Aorta (tissue), 5 donors: ENCODE measurements at regions of chr7 and their contacts with region 1.

Region 1: GRCh38 chr7:30224511-30225062 is 59.8 kb upstream of the ZNRF2 start:
- DNase-seq: no peak
- ATAC-seq: no peak
- H3K4me3 ChIP-seq: no peak overlapping the region
- H3K27ac ChIP-seq: peak overlapping the region in 1 of 2 donors; percentile 54
- H3K4me1 ChIP-seq: no peaks in the 10 kb centered on the region
- H3K27me3 ChIP-seq: no peaks in the 10 kb centered on the region

Region 2: GRCh38 chr7:30184791-30185487 is 39.6 kb before region 1 on chr7:
- intact Hi-C with region 1: loop called in 1 of 2 experiments (anchors 5 kb)
- DNase-seq: peak in 1 of 2 donors; percentile 73
- ATAC-seq: peak; percentile 82
- H3K4me3 ChIP-seq: no peak overlapping the region
- H3K27ac ChIP-seq: peak overlapping the region; percentile 7 to 58
- H3K4me1 ChIP-seq: peaks cover 7 to 14% of the 10 kb centered on the region in 2 donors
- H3K27me3 ChIP-seq: no peaks in the 10 kb centered on the region